PC-9 (cell line): ENCODE measurements at regions of chr3 and their contacts with region 1.

Region 1: GRCh38 chr3:12125767-12126166 is 32.9 kb downstream of the TIMP4 start:
- DNase-seq: no peak
- H3K4me3 ChIP-seq: no peak overlapping the region
- H3K27ac ChIP-seq: no peak overlapping the region
- H3K4me1 ChIP-seq: no peaks in the 10 kb centered on the region
- H3K27me3 ChIP-seq: no peaks in the 10 kb centered on the region
- CTCF ChIP-seq: no peak

Region 2: DNA sequence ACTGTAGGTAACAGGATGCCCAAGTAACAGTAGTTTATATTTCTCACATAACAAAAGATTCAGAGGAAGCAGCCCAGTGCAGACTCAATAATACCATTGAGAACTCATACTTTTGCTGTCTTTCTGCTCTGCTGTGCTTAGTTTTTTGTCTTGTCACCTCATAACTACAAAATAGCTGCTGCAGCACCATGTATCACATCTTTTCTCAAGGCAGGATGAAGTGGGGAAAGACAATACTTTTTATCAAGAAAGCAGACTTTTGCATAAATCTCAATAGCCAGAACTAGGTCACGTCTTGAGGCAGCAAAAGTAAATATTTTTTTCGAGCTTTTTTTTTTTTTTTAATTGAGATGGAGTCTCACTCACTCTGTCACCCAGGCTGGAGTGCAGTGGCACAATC is 161.2 kb before region 1 on chr3:
- CTCF ChIA-PET with region 1: no interaction called
- POLR2A ChIA-PET with region 1: interaction called, 10 read pairs
- intact Hi-C with region 1: no loop called
- DNase-seq: no peak
- H3K4me3 ChIP-seq: no peak overlapping the region
- H3K27ac ChIP-seq: no peak overlapping the region
- H3K4me1 ChIP-seq: no peaks in the 10 kb centered on the region
- H3K27me3 ChIP-seq: peaks cover 95% of the 10 kb centered on the region
- CTCF ChIP-seq: no peak

Region 3: DNA sequence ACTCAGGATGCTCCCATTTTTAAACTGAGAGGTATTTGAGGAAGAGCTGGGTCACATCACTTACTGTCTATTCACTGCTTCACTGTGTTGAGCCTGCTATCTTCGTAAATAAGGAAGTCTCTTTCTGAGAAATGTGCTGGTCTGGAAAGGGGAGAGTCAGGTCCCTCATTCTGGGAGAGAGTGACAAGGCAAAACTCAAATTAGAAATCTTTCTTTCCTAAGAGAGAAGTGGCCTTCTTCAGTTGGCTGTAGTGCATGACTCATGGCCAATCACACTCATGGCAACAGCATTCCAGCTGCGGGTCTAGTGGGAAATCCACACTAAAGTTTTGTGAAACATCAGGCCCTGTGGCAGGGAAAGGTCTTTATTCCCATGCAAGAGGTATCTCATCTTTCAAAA is 44.4 kb after region 1 on chr3:
- CTCF ChIA-PET with region 1: no interaction called
- POLR2A ChIA-PET with region 1: no interaction called
- intact Hi-C with region 1: no loop called
- DNase-seq: no peak
- H3K4me3 ChIP-seq: no peak overlapping the region
- H3K27ac ChIP-seq: no peak overlapping the region
- H3K4me1 ChIP-seq: peaks cover 5% of the 10 kb centered on the region
- H3K27me3 ChIP-seq: no peaks in the 10 kb centered on the region
- CTCF ChIP-seq: no peak